ENCODE measurements at regions of chr10 and their contacts with region 1.

Region 1: GRCh38 chr10:70820976-70821755 is 5.4 kb downstream of the SGPL1 start:
- DNase-seq: peak; percentile 75
- ATAC-seq: peak; percentile 18; the same call in 1 of the 2 replicates
- H3K4me3 ChIP-seq: no peak overlapping the region
- H3K27ac ChIP-seq: peak overlapping the region; percentile 55
- H3K4me1 ChIP-seq: peaks cover 36% of the 10 kb centered on the region
- H3K27me3 ChIP-seq: no peaks in the 10 kb centered on the region
- CTCF ChIP-seq: peak; percentile 78

Region 2: GRCh38 chr10:70558871-70559810 is 262.0 kb before region 1 on chr10:
- CTCF ChIA-PET with region 1: interaction called, 4 read pairs
- POLR2A ChIA-PET with region 1: no interaction called
- intact Hi-C with region 1: loop called (anchors 1 kb)
- DNase-seq: peak; percentile 91
- ATAC-seq: peak; percentile 88
- H3K4me3 ChIP-seq: peak overlapping the region; percentile 56
- H3K27ac ChIP-seq: no peak overlapping the region
- H3K4me1 ChIP-seq: no peaks in the 10 kb centered on the region
- H3K27me3 ChIP-seq: no peaks in the 10 kb centered on the region
- CTCF ChIP-seq: peak; percentile 96

Measured in PC-3 (cell line).